HCT116 (cell line): ENCODE measurements at regions of chr22 and their contacts with region 1.

Region 1: GRCh38 chr22:35231585-35232084 is 25.7 kb upstream of the HMGXB4 start:
- DNase-seq: peak; percentile 85
- ATAC-seq: peak; percentile 93
- H3K4me3 ChIP-seq: peak overlapping the region; percentile 49 to 64
- H3K27ac ChIP-seq: peak overlapping the region; percentile 28
- H3K4me1 ChIP-seq: peaks cover 0 to 20% of the 10 kb centered on the region in 2 experiments; a peak in 2 of 4 replicates
- H3K27me3 ChIP-seq: no peaks in the 10 kb centered on the region
- CTCF ChIP-seq: peak; percentile 64 to 99 (median 98)
- POLR2A ChIP-seq: no peak
- RAD21 ChIP-seq: peak; percentile 74

Region 2: DNA sequence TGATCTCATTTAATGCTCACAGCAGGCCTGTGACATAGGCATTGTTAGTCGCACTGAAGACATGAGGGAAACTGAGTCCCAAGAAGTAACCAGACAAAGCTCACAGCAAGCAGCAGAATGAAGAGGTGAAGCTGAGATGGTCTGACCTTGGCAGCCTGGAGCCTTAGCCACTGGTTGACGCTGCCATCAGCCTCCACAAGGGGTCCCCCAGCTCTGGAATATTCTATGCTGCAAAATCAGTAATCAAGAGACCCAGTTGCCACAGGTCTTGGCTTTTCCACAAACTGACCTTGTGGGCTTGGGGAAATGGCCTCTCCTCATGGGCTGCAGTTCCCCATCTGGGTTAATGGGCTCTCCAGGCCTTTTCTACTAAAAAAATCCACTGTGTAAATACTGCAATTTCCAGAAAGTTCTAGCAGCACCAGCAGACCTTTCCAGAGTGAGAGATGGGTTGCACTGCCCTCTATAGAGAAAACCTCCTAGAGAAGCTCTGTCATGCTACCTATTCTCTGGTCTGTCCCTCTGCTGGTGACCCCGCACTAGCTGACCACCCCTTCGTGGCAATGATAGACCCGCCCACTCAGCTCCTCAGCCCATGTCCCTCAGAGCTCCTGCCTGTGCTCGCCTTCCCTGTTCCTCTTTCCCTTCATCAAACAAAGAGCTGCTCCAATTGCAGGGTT is 188.2 kb before region 1 on chr22:
- CTCF ChIA-PET with region 1: interaction called, 13 read pairs
- POLR2A ChIA-PET with region 1: no interaction called
- RAD21 ChIA-PET with region 1: no interaction called
- intact Hi-C with region 1: loop called (anchors 10 kb)
- DNase-seq: no peak
- ATAC-seq: peak; percentile 61
- H3K4me3 ChIP-seq: no peak overlapping the region
- H3K27ac ChIP-seq: no peak overlapping the region
- H3K4me1 ChIP-seq: no peaks in the 10 kb centered on the region
- H3K27me3 ChIP-seq: peaks cover 10% of the 10 kb centered on the region; the same call in 1 of the 2 replicates
- CTCF ChIP-seq: peak; percentile 8 to 40 (median 40); a peak in 5 of 6 replicates
- POLR2A ChIP-seq: no peak
- RAD21 ChIP-seq: peak; percentile 29; the same call in 1 of the 2 replicates

Region 3: GRCh38 chr22:35150183-35151107 is 81.2 kb before region 1 on chr22:
- CTCF ChIA-PET with region 1: interaction called, 33 read pairs
- POLR2A ChIA-PET with region 1: no interaction called
- RAD21 ChIA-PET with region 1: no interaction called
- intact Hi-C with region 1: no loop called
- DNase-seq: peak; percentile 24
- ATAC-seq: peak; percentile 82
- H3K4me3 ChIP-seq: no peak overlapping the region
- H3K27ac ChIP-seq: no peak overlapping the region
- H3K4me1 ChIP-seq: peaks cover 3 to 5% of the 10 kb centered on the region in 2 experiments; a peak in 2 of 4 replicates
- H3K27me3 ChIP-seq: no peaks in the 10 kb centered on the region
- CTCF ChIP-seq: peak; percentile 28 to 91 (median 84); a peak in 5 of 6 replicates
- POLR2A ChIP-seq: no peak
- RAD21 ChIP-seq: peak; percentile 64

Region 4: GRCh38 chr22:35219012-35219411 is 12.6 kb before region 1 on chr22:
- CTCF ChIA-PET with region 1: interaction called, 15 read pairs
- POLR2A ChIA-PET with region 1: interaction called, 3 read pairs
- RAD21 ChIA-PET with region 1: no interaction called
- intact Hi-C with region 1: no loop called
- DNase-seq: peak; percentile 3
- ATAC-seq: peak; percentile 80
- H3K4me3 ChIP-seq: no peak overlapping the region
- H3K27ac ChIP-seq: no peak overlapping the region
- H3K4me1 ChIP-seq: peaks cover 6 to 28% of the 10 kb centered on the region in 2 experiments; a peak in 3 of 4 replicates
- H3K27me3 ChIP-seq: no peaks in the 10 kb centered on the region
- CTCF ChIP-seq: no peak
- POLR2A ChIP-seq: no peak
- RAD21 ChIP-seq: no peak